Lower lobe of right lung (tissue), 2 donors: ENCODE measurements at regions of chr5 and their contacts with region 1.

Region 1: GRCh38 chr5:28344803-28345433 is 1306.5 kb upstream of the CDH9 start:
- DNase-seq: no peak
- ATAC-seq: peak; percentile 68 to 80
- H3K4me3 ChIP-seq: no peak overlapping the region
- H3K27ac ChIP-seq: no peak overlapping the region
- H3K4me1 ChIP-seq: no peaks in the 10 kb centered on the region
- H3K27me3 ChIP-seq: no peaks in the 10 kb centered on the region
- CTCF ChIP-seq: peak; percentile 47

Region 2: GRCh38 chr5:28766565-28767158 is 421.7 kb after region 1 on chr5:
- intact Hi-C with region 1: loop called (anchors 10 kb)
- DNase-seq: no peak
- ATAC-seq: no peak
- H3K4me3 ChIP-seq: no peak overlapping the region
- H3K27ac ChIP-seq: no peak overlapping the region
- H3K4me1 ChIP-seq: no peaks in the 10 kb centered on the region
- H3K27me3 ChIP-seq: no peaks in the 10 kb centered on the region
- CTCF ChIP-seq: peak; percentile 34